ENCODE measurements at regions of chr1 and their contacts with region 1.

Region 1: DNA sequence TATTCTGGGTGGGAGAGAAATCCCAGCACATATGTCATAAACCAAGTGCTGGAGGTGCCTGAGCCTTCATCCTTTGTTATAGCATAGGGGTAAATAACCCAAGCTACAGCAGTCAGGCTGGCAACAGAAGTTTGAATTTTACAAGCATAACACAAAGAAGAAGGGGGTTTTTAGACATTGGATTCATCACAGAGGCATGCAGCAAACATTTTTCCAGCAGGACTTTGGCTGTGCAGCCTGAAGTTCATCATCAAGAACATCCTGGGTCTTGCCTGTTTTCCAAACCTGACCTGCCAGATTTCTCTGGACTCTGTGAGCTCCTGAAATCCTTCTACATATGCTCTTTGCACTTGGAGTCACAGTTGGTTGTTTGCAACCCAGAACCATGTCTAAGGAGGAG is 16.2 kb downstream of the PTGER3 start:
- DNase-seq: no peak
- ATAC-seq: peak; percentile 41
- H3K4me3 ChIP-seq: no peak overlapping the region
- H3K27ac ChIP-seq: no peak overlapping the region
- H3K4me1 ChIP-seq: peaks cover 2 to 10% of the 10 kb centered on the region in 2 donors
- H3K27me3 ChIP-seq: no peaks in the 10 kb centered on the region

Region 2: DNA sequence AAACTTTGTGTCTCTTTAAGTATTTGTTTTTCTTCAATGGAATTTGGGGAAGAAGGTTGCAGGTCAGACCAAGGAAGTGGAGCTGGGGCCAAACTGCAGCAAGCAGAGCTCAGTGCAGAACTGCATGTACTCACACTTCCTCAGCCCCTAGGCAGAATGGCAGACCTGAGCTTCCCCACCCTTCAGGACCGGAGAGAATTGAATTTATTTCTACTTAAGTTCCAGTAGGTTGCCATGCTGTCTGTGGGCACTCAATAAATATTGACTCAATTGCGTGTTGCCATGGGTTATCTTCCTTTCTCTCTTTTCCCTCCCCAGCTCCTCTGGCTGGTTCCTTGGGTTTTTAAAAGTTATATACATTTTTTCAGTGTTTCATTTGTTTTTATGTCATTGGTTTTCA is 157.3 kb before region 1 on chr1:
- intact Hi-C with region 1: loop called in 1 of 2 experiments (anchors 5 kb)
- DNase-seq: no peak
- ATAC-seq: peak; percentile 60
- H3K4me3 ChIP-seq: no peak overlapping the region
- H3K27ac ChIP-seq: peak overlapping the region; percentile 10 to 49
- H3K4me1 ChIP-seq: peaks cover 0 to 10% of the 10 kb centered on the region in 2 donors
- H3K27me3 ChIP-seq: no peaks in the 10 kb centered on the region

Region 3: DNA sequence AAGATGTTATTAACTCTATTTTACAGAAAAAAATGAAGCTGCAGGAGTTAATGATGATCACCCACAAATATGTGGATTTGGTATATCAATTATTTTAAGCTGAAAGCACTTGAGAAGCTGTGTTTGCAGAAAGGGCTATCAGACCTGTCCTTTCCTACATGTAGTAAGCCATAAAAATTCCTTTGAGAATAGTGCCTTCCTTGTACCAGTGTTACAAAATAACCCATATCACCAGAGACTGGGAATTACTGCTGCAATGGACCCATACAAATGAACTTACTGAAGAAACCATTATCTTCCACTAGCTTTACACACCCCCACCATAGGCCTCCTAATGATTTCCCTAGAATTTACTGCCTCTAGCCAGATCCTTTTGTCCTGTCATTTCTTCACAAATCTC is 148.6 kb after region 1 on chr1:
- intact Hi-C with region 1: no loop called
- DNase-seq: no peak
- ATAC-seq: no peak
- H3K4me3 ChIP-seq: no peak overlapping the region
- H3K27ac ChIP-seq: no peak overlapping the region
- H3K4me1 ChIP-seq: no peaks in the 10 kb centered on the region
- H3K27me3 ChIP-seq: no peaks in the 10 kb centered on the region

Region 4: GRCh38 chr1:71193153-71193552 is 161.7 kb after region 1 on chr1:
- intact Hi-C with region 1: no loop called
- DNase-seq: no peak
- ATAC-seq: no peak
- H3K4me3 ChIP-seq: no peak overlapping the region
- H3K27ac ChIP-seq: peak overlapping the region in 1 of 2 donors; percentile 43
- H3K4me1 ChIP-seq: no peaks in the 10 kb centered on the region
- H3K27me3 ChIP-seq: no peaks in the 10 kb centered on the region